ENCODE measurements at regions of chr9 and their contacts with region 1.

Region 1: DNA sequence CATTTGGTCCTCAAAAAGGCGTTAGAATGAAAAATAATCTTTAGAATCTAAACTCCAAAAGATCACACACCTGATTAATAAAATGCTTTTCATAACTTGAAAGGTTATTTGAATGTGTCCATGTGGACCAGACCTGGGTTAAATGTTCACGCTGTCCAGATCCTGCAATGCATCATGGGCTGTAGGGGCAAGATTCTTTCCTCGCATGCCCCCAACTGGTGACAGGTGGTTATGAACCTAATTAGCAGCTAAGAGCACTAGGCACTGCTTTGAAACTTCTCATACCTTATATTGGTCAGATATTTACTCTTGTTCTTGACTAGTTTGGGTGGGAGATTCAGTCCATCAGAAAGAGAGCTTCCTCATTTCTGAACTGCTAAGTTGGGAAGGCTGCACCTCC is 19.3 kb upstream of the PIP5K1B start:
- DNase-seq: peak; percentile 48
- CTCF ChIP-seq: peak; percentile 81

Region 2: DNA sequence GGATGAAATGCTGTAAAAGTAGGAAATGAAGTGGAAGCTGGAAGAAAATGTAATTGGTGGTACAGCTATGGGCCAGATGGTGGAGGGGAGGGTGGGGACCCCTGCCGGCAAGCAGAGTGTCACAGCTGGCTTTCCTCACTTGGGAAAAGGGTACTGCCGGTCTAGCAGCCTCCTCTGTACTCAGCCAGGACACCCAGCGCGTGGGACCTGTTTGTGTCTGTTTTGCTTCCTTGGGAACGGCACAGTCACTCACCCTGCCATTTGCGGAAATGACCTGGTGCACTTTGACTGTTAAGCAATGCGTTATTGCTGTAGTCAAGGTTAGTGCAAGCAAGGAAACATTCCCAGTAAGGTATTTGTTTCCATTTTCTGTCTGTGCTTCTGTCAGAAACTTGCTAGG is 155.2 kb before region 1 on chr9:
- in situ Hi-C with region 1: no loop called
- DNase-seq: no peak
- CTCF ChIP-seq: no peak

Region 3: DNA sequence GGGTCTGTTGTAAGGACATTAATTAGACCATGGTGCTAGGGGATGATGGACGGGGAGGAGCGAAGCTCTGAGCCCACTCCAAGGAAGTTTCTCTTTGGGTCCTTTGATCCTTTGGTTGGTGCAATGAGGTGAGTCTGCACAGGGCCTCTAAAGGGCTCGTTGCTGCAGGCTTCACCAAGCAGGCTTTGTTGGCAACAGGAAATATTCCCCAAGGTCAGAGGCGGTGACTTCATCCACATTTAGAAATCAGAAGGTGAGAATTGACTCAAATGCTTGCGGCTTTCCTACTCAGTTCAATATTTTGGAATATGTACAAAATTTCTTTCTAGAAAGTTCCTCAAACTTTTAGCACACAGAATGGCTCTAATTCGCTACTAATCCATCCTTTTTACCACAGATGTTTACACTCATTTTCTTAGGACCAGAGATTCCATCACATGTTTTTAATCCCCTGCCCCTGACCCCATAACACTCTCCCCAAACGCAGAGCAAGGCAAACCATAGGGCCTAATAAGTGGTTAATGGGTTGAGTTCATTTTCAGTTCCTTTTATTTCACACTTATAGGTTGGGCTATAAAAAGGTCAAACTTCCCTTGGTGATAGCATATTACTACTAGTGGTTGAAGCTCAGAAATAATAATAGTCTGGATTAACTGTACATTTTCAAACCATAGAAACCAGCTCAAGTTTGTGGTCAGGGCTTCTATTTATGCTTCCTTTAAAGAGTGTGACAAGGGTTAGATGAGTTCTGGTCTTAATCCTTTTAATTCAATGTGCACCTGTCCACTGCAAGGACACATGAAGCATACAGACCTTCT is 107.8 kb before region 1 on chr9:
- in situ Hi-C with region 1: no loop called
- DNase-seq: no peak
- CTCF ChIP-seq: no peak

Region 4: DNA sequence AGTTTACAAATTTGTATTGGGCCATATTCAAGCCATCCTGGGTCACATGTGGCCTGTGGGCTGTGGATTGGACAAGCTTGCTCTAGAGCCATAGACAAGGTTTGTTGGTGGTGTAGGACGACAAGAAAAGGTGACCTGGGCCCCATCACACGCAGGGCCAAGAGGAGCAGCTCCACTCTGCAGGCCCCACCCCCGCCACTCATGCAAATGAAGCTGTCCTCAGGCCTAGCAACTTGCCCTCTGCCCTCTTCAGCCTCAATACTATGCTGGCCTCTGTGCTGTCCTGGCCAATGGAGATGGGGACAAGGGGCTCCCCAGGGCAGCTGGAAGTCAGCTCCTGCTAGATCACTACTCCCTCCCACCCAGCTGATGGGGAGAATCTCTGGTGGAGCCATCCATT is 89.9 kb before region 1 on chr9:
- in situ Hi-C with region 1: loop called (anchors 10 kb)
- DNase-seq: no peak
- CTCF ChIP-seq: no peak

Region 5: DNA sequence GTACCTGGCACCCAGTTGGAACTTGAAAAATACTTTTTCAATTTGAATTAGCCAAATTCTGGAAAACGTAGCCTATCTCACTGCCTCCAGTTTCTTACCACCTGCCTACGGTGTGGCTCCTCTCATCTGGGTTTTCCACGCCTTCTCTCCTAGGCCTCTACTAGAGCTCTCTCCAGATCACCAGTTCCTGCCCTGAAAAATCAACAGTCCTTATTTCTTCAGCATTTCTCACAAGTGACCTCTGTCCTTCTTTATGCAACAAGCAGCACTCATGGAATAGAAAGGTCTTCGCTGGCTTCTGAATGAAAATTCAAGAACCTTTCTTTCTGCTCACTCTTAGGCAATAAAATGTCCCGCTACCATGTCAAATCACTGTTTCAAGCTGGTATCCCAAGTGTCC is 84.1 kb after region 1 on chr9:
- in situ Hi-C with region 1: no loop called
- DNase-seq: no peak
- CTCF ChIP-seq: no peak